Activated CD4-positive, alpha-beta T cell treated with anti-CD3 and anti-CD28 coated beads for 36 hours (primary cell): ENCODE measurements at regions of chr6 and their contacts with region 1.

Region 1: GRCh38 chr6:34386316-34387137 is 5.9 kb downstream of the NUDT3 start:
- DNase-seq: no peak
- ATAC-seq: no peak
- H3K4me3 Mint-ChIP-seq: no peak overlapping the region
- H3K27ac Mint-ChIP-seq: no peak overlapping the region
- H3K4me1 Mint-ChIP-seq: peaks cover 20% of the 10 kb centered on the region
- H3K27me3 Mint-ChIP-seq: no peaks in the 10 kb centered on the region

Region 2: DNA sequence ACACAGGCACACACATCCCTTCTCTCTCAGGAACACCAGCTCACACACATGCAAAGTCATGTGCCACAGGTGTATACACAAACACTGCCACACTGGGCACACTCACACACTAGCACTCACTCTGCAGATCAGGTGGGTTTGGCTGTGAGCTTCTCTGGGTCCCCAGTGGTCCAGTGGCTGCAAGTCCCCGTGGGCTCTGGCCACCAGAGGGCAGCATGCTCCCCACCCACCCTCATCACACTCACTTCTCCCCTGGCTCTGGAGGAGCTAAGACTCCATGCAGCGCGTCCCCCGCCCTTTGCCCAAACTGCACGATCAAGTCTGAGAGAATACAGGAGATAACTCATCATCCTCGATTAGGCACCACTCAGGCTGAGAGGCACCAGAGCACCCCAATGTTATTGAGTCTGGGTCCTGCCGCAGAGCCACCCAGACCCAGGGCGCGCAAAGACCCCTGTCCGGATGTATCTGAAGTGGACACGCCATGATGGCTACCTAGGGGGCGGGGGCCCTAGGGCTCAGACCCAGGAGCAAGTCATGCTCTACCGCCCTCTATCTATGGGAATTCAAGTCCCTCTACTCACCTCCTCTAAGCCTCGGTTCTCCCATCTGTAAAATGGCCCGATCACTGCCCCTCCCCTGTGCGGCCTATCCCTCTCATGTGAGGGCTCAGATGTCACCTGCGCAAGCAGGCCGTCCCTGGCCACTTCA is 331.1 kb before region 1 on chr6:
- CTCF ChIA-PET with region 1: no interaction called
- POLR2A ChIA-PET with region 1: no interaction called
- intact Hi-C with region 1: no loop called
- DNase-seq: peak; percentile 80
- ATAC-seq: peak; percentile 85
- H3K4me3 Mint-ChIP-seq: no peak overlapping the region
- H3K27ac Mint-ChIP-seq: no peak overlapping the region
- H3K4me1 Mint-ChIP-seq: no peaks in the 10 kb centered on the region
- H3K27me3 Mint-ChIP-seq: no peaks in the 10 kb centered on the region

Region 3: GRCh38 chr6:34414999-34415858 is 28.7 kb after region 1 on chr6:
- CTCF ChIA-PET with region 1: interaction called, 3 read pairs
- POLR2A ChIA-PET with region 1: interaction called, 10 read pairs
- intact Hi-C with region 1: no loop called
- DNase-seq: peak; percentile 48
- ATAC-seq: peak; percentile 57
- H3K4me3 Mint-ChIP-seq: no peak overlapping the region
- H3K27ac Mint-ChIP-seq: peak overlapping the region; percentile 51
- H3K4me1 Mint-ChIP-seq: peaks cover 15% of the 10 kb centered on the region
- H3K27me3 Mint-ChIP-seq: no peaks in the 10 kb centered on the region

Region 4: DNA sequence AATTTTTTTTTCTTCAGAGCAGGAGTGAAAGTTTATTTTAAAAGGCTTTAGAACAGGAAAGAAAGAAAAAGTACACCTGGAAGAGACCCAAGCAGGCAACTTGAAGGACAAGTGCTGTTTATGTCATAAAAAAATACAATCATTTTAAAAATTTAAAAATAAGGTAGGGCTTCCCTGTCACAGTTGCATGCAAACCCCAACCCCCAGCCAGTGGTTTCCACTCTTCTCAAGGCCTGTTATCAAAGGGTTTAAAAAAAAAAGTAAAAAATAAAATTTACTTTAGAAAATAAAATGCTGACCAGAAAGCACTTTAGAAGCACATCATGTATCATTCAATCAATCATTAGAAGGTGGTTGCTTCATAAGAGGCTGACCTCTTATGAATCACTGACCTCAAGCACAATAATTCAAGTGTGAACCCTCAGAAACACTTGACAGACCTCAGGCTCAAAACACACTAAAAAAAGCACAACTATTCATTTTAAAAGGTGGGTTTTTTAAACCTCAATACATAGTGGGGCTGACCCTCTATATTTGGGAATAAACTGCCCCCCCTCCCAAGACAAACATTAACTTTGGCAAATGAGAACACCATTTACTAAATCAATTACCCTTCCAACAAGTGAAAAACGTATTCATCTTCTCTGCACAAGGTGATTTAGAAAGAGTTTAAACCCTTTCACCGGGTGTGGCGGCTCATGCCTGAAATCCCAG is 294.4 kb after region 1 on chr6:
- CTCF ChIA-PET with region 1: no interaction called
- POLR2A ChIA-PET with region 1: no interaction called
- intact Hi-C with region 1: no loop called
- DNase-seq: no peak
- ATAC-seq: peak; percentile 53
- H3K4me3 Mint-ChIP-seq: no peak overlapping the region
- H3K27ac Mint-ChIP-seq: no peak overlapping the region
- H3K4me1 Mint-ChIP-seq: peaks cover 27% of the 10 kb centered on the region
- H3K27me3 Mint-ChIP-seq: no peaks in the 10 kb centered on the region